Natural killer cell (primary cell): ENCODE measurements at regions of chr5 and their contacts with region 1.

Region 1: DNA sequence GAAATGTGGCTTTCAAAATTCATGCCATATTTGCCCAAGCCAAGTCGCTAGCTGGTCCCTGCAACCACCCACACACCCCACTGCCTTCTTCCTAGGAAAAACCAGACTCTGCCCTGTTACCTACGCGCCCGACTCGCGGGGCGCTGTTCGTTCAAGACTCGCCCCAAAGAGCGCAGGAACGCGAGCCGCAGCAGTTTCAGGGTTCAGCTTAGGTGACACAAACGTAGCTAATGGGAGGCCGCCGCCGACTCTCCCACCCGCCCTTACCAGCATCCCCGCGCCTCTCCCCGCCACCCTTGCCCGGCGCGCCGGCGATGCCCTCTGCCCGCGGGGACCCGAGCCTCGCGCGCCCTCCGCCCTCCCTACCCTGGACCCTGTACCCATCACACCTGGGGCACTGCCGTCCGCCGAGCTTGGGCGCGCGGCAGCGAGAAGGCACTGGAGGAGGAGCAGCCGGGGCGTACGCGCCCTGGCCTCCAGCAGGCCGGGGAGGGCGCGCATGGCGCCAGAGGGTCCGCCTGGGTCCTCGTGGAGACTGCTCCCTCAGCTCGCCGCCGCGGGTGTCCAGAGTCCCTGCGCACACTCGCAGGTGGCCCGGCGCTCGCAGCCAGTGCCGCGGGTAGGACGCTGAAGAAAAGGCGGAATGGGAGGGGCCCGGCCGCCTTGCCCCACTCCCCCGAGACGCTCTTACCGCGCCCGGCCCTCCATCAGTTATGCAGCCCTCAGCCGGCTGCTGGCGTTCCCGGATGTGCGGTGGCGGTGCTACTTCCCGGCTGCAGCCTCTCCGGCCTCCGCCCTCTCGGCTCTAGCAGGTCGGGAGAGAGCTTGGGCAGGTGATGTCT is at the start of gene EMB:
- DNase-seq: peak; percentile 70 to 90
- ATAC-seq: peak; percentile 72 to 82 (median 78)
- H3K4me3 ChIP-seq: peak within 1 kb of the TSS; percentile 68
- H3K4me3 Mint-ChIP-seq: peak within 1 kb of the TSS; percentile 91
- H3K27ac ChIP-seq: peak within 1 kb of the TSS; percentile 88
- H3K27ac Mint-ChIP-seq: peak within 1 kb of the TSS; percentile 91 to 94
- H3K4me1 ChIP-seq: peaks cover 28% of the 10 kb centered on the region
- H3K4me1 Mint-ChIP-seq: peaks cover 58 to 59% of the 10 kb centered on the region in 2 donors
- H3K27me3 ChIP-seq: no peaks in the 10 kb centered on the region
- H3K27me3 Mint-ChIP-seq: no peaks in the 10 kb centered on the region
- CTCF ChIP-seq: peak; percentile 32
- total RNA-seq, gene EMB: 179 to 223 (median 199) TPM

Region 2: DNA sequence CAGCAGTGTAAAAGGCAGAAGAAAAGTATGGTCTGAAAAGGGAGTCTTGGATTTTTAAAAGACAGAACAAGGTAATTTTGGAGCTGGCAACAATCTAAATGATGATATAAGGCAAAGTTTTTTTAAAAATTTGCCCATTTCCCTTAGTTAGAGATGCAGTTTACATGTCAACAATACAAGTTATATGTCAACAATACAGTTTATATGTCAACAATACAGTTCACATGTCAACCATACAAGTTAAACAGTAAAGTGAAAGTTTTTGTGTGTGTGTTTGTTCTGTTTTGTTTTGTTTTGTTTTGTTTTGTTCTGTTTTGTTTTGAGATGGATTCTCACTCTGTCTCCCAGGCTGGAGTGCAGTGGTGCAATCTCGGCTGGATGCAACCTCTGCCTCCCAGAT is 154.0 kb before region 1 on chr5:
- intact Hi-C with region 1: no loop called
- DNase-seq: no peak
- ATAC-seq: no peak
- H3K4me3 ChIP-seq: no peak overlapping the region
- H3K4me3 Mint-ChIP-seq: no peak overlapping the region
- H3K27ac ChIP-seq: no peak overlapping the region
- H3K27ac Mint-ChIP-seq: no peak overlapping the region
- H3K4me1 ChIP-seq: no peaks in the 10 kb centered on the region
- H3K4me1 Mint-ChIP-seq: peaks cover 0 to 5% of the 10 kb centered on the region in 2 donors
- H3K27me3 ChIP-seq: no peaks in the 10 kb centered on the region
- H3K27me3 Mint-ChIP-seq: no peaks in the 10 kb centered on the region
- CTCF ChIP-seq: no peak

Region 3: DNA sequence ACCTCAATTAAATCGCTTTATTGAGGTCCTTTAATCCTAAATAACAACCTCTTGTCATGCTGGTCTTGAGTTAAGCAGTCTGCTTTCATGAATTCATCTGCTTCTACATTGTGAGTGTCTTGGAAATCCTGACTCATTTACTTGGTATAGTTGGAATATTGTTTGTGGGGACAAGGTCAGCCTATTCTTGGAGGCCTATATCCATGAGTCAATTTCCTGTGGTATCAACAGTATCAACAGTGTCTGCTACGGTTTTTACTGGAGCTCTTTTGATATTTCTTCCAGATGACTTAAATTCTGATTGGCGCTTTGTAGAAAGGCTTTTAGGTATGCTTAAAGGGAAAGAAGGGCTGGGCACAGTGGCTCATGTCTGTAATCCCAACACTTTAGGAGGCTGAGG is 154.3 kb after region 1 on chr5:
- intact Hi-C with region 1: loop called (anchors 5 kb)
- DNase-seq: no peak
- ATAC-seq: peak in 1 of 3 donors; percentile 44
- H3K4me3 ChIP-seq: no peak overlapping the region
- H3K4me3 Mint-ChIP-seq: peak overlapping the region; percentile 45
- H3K27ac ChIP-seq: peak overlapping the region; percentile 38
- H3K27ac Mint-ChIP-seq: peak overlapping the region; percentile 82 to 84
- H3K4me1 ChIP-seq: peaks cover 27% of the 10 kb centered on the region
- H3K4me1 Mint-ChIP-seq: peaks cover 73 to 75% of the 10 kb centered on the region in 2 donors
- H3K27me3 ChIP-seq: no peaks in the 10 kb centered on the region
- H3K27me3 Mint-ChIP-seq: no peaks in the 10 kb centered on the region
- CTCF ChIP-seq: no peak

Region 4: DNA sequence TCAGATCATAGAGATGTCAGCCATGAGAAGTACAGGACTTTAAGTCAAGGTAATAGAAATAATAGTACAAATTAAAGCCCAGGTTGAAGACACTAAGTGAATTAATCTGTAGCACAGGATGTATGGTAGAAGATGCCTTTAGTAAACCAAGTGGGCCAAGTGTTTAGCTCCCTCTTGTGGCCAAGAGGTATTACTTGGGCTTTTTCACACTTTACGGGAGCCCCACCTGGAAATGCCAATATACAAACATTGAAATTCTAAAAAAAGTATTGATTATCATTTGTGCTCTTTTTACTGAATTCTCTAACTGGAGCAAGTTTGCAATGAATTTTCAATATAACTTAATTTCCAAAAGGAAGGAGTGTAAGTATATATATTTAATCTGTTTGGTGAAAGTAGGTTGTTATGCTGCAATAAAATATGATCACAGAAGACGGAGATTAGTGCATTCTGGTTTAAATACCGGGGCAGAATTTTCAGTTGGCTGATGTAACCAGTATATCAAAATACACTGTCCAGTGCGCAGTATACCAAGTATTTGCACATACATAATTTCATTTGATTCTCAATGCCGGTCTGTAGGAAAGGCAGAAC is 310.3 kb after region 1 on chr5:
- intact Hi-C with region 1: loop called (anchors 5 kb)
- DNase-seq: peak in 1 of 2 donors; percentile 86
- ATAC-seq: peak; percentile 86 to 94 (median 93)
- H3K4me3 ChIP-seq: no peak overlapping the region
- H3K4me3 Mint-ChIP-seq: peak overlapping the region; percentile 69
- H3K27ac ChIP-seq: peak overlapping the region; percentile 48
- H3K27ac Mint-ChIP-seq: peak overlapping the region; percentile 83 to 86
- H3K4me1 ChIP-seq: peaks cover 3% of the 10 kb centered on the region
- H3K4me1 Mint-ChIP-seq: peaks cover 56 to 65% of the 10 kb centered on the region in 2 donors
- H3K27me3 ChIP-seq: no peaks in the 10 kb centered on the region
- H3K27me3 Mint-ChIP-seq: no peaks in the 10 kb centered on the region
- CTCF ChIP-seq: peak; percentile 96